ENCODE measurements at regions of chr12 and their contacts with region 1.

Region 1: GRCh38 chr12:109421355-109422087 is 55.6 kb downstream of the KCTD10 start:
- DNase-seq: no peak
- H3K4me3 ChIP-seq: no peak overlapping the region
- H3K27me3 ChIP-seq: 0 out of 2 replicates have a peak, but pooled peaks cover 4% of the 10 kb centered on the region
- CTCF ChIP-seq: no peak

Region 2: DNA sequence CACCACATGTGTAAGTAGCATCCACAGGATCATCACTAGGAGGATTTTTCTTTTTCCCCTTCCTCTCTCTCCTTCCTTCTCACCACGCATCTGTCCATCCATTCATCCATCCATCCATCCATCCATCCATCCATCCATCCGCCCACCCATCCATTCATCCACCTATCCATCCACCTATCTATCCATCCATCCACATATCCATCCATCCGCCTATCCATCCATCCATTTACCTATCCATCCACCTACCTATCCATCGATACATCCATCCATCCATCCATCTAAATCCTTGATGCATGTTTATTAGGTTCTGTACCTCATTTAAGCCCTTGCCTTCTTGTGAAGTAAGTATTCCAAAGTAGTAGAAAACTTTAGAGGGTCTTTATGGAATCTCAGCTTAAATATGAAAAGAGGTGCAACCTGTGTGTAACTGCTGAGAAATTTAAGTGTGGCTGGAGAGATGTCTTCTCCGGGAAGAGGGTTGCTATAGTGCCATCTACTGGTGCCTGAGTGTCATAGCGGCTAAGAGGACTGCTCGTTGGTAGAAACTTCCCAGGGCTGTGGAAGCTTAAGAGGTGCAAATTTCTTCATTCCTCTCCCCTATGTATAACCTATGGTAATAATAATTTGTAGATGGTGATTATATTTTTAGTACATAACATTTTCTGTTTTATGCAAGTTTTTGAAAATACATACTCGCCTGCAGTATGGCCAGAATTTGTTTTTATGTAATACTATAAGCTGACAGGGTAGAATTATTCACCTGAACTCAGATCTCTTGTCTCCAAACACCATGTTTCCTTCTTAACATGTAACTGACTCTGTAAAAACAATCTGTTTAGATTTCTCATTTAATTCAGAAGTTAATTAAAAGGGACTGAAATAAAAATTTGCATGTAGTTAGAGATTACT is 27.8 kb before region 1 on chr12:
- CTCF ChIA-PET with region 1: interaction called, 12 read pairs
- POLR2A ChIA-PET with region 1: no interaction called
- DNase-seq: no peak
- H3K4me3 ChIP-seq: no peak overlapping the region
- H3K27me3 ChIP-seq: no peaks in the 10 kb centered on the region
- CTCF ChIP-seq: peak; percentile 93

Measured in BJ (cell line).